Mammary epithelial cell (primary cell): ENCODE measurements at regions of chr15 and their contacts with region 1.

Region 1: DNA sequence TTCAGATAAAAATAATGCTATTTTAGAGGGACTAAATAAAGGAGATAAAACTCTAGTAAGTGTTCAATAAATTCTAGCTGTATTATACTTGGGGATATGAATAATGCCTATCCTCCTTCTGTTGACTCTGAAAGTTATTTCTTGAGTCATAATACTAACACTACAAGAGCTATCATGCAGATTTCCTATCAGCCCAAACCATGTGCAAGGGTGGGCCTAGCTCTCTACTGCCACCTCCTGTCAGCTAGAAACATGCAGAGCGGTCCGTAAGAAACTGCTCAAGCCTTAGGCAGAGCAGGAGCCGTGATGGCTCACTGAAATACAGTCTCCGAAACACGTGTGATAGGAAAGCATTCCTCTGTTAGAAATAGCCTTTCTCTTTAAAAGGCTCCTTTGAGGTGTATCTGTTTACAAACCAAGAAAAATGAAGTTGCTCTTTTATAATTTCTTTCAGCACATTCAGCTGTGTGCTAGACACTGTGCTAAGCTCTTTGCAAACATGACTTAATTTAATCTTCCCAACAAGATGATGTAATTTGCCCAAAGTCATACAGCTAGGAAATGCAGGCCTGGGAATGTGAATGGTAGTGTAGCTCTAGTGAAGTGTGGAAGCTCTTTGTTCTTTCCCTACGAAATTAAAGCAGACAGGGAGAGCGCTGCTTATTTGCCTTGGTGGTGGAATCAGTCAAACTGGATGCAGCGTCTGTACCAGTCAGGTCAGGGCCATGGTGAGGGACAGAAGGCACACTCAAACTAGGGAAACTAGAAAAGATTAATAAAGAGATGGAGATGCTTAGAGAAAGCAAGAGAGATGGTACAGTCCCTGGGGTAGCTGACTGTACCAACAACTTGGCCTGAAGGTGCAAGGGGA is 43.1 kb downstream of the MTHFS start:
- DNase-seq: peak; percentile 81
- H3K4me3 ChIP-seq: no peak overlapping the region
- H3K27ac ChIP-seq: no peak overlapping the region
- H3K4me1 ChIP-seq: peaks cover 13% of the 10 kb centered on the region
- H3K27me3 ChIP-seq: no peaks in the 10 kb centered on the region
- CTCF ChIP-seq: peak; percentile 99 to 100

Region 2: DNA sequence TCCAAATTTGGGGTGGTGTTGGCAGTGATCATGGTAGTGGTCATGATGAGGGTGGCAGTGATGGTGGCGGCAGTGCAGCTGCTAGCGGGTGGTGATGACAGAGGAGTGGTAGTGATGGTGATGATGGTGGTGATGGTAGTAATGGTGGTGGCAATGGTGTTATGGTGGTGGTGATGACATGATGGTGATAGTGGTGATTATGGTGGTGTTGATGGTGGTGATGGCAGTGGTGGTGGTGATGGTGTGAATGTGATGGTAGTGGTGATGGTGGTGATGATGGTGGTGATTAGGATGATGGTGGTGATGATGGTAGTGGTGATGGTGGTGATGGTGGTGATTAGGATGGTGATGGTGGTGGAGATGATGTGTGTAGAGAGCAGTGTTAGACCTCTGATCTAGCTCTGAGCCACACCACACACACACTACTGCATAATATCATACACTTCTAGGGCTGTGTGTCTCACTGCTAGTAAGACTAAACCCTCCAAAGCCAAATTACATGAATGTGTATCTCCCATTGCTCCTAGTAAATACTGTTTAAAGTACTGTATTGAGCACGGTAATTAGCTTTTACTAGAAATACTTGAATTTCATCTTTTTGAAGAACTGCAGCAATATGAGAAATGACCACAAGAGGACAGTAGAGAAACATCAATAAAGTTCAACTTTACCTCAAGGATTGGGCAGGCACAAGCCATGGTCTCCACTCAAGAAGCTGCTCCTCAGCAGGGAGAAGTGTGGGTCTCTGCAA is 514.0 kb before region 1 on chr15:
- CTCF ChIA-PET with region 1: interaction called, 9 read pairs
- dilution Hi-C with region 1: no loop called
- in situ Hi-C with region 1: no loop called
- intact Hi-C with region 1: loop called (anchors 1 kb)
- DNase-seq: peak; percentile 8
- H3K4me3 ChIP-seq: no peak overlapping the region
- H3K27ac ChIP-seq: no peak overlapping the region
- H3K4me1 ChIP-seq: no peaks in the 10 kb centered on the region
- H3K27me3 ChIP-seq: no peaks in the 10 kb centered on the region
- CTCF ChIP-seq: peak; percentile 92 to 95

Region 3: DNA sequence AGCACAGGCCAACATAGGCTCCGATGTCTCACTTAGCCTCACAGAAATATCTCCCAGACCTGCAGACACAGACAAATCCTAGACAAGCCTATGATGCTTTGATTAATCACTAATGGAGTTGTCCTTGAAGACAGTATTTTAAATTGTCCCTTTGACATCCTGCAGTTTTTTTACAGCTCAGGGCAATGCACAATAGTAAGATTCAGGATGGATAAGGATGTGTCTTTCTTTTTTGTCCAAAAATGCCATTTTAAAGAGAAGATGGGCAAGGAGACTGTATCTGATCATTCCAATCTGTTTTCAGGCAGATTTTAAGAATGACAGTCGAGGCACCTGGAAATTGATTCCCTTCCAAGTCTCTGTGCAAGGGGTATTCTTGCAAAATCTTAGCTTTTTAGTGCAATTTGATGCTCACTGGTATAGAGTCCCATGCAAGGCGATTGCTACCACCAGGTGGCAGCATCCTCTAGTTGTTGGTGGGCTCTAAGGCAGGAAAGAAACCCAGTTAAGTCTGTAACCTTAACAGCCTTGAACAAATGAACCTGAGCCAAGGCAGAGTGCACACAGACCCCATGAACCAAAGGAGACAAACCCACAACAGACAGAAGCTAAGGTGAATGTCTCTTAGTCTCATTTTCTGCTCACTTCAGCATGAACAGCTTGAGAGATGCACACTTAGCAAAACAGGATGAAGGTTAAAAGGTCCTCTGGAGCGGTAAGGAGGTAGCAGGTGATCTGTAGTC is 472.8 kb before region 1 on chr15:
- CTCF ChIA-PET with region 1: interaction called, 6 read pairs
- dilution Hi-C with region 1: no loop called
- in situ Hi-C with region 1: no loop called
- intact Hi-C with region 1: loop called (anchors 1 kb)
- DNase-seq: peak; percentile 42
- H3K4me3 ChIP-seq: no peak overlapping the region
- H3K27ac ChIP-seq: no peak overlapping the region
- H3K4me1 ChIP-seq: no peaks in the 10 kb centered on the region
- H3K27me3 ChIP-seq: no peaks in the 10 kb centered on the region
- CTCF ChIP-seq: peak; percentile 88 to 95

Region 4: GRCh38 chr15:79769069-79769481 is 84.6 kb before region 1 on chr15:
- CTCF ChIA-PET with region 1: no interaction called
- dilution Hi-C with region 1: no loop called
- in situ Hi-C with region 1: no loop called
- intact Hi-C with region 1: loop called (anchors 1 kb)
- DNase-seq: peak; percentile 26
- H3K4me3 ChIP-seq: no peak overlapping the region
- H3K27ac ChIP-seq: no peak overlapping the region
- H3K4me1 ChIP-seq: no peaks in the 10 kb centered on the region
- H3K27me3 ChIP-seq: no peaks in the 10 kb centered on the region
- CTCF ChIP-seq: peak; percentile 36 to 65

Region 5: DNA sequence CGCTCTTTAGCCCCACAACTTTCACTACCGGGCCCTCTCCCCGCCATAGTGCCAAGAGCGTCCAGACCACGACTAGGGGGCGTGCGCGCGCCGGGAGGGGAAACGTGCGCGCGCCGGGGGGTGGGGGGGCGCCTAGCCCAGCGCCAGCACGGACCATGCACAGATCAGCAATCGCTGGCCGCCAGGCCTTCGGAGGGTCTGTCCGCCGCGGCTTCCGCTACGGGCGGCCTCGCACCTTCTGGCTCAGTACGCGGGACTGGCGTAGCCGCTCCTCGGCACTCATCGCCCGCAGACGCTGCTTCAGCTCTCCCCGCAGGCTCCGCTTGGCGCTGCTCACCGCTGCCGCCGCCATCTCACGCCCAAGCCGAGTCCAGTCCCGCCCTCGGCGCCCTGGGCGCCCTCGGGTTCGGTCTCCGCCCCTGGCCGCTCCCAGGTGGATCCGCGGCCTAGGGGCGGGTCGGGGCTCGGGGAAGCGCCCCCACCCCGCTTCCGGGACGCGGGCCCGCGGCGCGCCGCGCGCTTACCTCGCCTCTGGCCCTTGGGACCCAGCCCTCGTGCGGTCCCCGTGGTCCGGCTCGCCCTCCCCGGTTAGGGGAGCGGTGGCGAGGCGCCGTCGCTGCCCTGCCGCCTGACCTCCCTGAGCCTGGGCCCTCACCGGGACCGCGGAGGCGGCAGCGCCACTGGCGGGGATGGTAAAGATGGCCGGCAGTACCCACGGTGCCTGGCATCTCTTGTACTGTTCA is 43.1 kb after region 1 on chr15 and contains the start of gene MTHFS:
- CTCF ChIA-PET with region 1: interaction called, 10 read pairs
- dilution Hi-C with region 1: no loop called
- in situ Hi-C with region 1: no loop called
- intact Hi-C with region 1: no loop called
- DNase-seq: peak; percentile 80
- H3K4me3 ChIP-seq: peak within 1 kb of the TSS; percentile 51 to 73 (median 59)
- H3K27ac ChIP-seq: peak within 1 kb of the TSS; percentile 76
- H3K4me1 ChIP-seq: peaks cover 12% of the 10 kb centered on the region
- H3K27me3 ChIP-seq: no peaks in the 10 kb centered on the region
- CTCF ChIP-seq: peak; percentile 21 to 64
- total RNA-seq, gene MTHFS: 21.7 to 32.8 TPM

Region 6: GRCh38 chr15:80072285-80072994 is 218.7 kb after region 1 on chr15:
- CTCF ChIA-PET with region 1: no interaction called
- dilution Hi-C with region 1: no loop called
- in situ Hi-C with region 1: no loop called
- intact Hi-C with region 1: no loop called
- DNase-seq: peak; percentile 93
- H3K4me3 ChIP-seq: peak overlapping the region; percentile 58 to 94 (median 72)
- H3K27ac ChIP-seq: peak overlapping the region; percentile 63
- H3K4me1 ChIP-seq: peaks cover 8% of the 10 kb centered on the region
- H3K27me3 ChIP-seq: no peaks in the 10 kb centered on the region
- CTCF ChIP-seq: no peak